Mammary epithelial cell (primary cell): ENCODE measurements at regions of chr1 and their contacts with region 1.

Region 1: DNA sequence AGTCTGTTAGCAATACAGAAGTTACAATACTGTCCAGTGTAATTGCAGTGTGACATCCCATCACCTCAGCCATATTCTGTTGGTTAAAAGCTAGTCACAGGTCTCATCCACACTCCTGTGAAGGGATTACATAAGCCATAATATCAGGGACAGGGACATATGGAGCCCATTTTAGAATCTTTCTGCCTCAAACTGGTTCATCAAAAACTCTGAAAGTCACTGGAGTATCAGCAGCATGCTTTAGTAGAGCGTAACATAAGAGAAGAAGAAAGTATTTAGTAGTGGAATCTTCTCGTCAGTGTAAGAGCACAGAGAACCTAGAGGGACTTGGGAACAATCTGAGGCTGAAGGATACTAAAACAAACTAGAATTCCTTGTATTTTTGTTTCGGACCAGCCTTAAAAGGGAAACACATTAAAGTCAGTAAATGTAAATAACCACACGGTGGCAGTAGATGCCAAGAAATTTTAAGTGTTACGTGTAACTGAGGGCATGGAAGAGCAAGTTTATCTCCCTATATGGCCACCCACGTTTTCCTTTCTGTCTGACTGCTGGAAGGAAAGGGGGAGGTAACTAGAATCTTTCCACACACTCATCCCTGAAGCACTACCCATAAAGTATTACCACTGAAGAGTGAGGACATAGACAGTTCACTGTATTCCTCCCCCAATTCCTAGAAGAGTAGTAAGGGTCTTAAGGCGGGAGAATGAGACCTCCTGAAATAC is 41.6 kb upstream of the AGL start:
- DNase-seq: peak; percentile 81
- H3K4me3 ChIP-seq: no peak overlapping the region
- H3K27ac ChIP-seq: peak overlapping the region; percentile 16
- H3K4me1 ChIP-seq: peaks cover 6% of the 10 kb centered on the region
- H3K27me3 ChIP-seq: no peaks in the 10 kb centered on the region
- CTCF ChIP-seq: peak; percentile 47 to 49

Region 2: DNA sequence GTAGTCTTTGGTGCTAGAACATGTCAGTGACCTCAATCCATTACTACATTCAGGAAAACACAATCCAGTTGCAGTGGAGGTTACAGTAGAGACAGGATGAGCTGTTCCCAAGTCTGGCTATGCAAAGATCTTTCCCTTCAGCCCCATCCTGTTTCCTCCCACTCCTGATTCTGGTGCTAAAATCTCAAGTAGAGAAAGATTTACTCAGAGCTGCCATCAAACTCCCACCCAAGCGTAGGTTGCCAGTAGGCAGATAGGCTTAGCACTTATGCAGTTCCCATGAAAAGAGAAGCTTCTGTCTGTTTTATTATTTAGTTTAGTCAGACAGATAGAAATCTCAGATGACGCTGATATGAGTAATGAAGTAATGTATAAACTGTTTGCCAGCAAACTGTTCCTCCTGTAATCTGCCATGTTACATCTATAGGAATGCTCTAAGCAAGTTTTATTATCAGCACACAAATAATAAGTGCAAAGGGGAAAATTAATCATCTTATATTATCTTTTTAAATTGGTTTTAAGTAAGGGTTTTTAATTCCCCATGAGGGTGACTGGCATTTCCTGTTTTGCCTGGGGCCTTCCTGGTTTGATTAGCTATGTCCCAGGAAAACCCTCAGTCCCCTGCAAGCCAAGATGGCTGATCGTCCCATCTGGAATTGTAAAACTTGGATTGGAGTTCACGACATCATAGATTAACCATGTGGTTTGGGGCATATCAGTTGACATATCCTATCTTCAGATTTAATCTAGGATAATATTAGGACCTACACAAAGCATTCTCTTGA is 351.0 kb before region 1 on chr1:
- CTCF ChIA-PET with region 1: no interaction called
- dilution Hi-C with region 1: no loop called
- in situ Hi-C with region 1: no loop called
- intact Hi-C with region 1: no loop called
- DNase-seq: peak; percentile 88
- H3K4me3 ChIP-seq: no peak overlapping the region
- H3K27ac ChIP-seq: peak overlapping the region; percentile 63
- H3K4me1 ChIP-seq: peaks cover 23% of the 10 kb centered on the region
- H3K27me3 ChIP-seq: no peaks in the 10 kb centered on the region
- CTCF ChIP-seq: no peak

Region 3: DNA sequence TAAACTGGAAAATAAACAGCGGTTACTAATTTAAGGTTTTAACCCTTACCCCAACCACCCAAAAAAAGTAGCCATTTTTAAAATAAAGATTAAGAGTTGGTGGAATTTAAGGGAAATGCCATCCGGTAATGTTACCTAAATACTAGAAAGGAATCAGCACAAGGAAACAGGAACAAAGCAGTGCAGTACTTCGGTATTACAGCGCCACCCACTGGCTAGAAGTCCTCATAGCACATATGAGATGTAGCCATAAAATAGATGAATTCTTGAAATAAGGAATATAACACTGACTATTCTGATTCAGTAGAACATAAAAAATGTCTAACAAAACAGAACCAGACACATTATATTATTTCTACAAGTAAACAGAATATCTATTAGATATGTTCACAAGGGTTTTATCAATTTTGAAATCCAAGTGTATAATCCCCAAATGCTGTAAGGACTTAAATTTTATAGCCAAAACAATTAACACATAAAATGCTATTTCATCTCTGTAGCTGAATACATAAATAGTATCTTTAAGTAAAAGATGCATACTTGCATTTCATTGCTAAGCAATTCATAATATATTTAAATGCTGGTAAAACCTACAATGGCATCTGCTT is 100.9 kb before region 1 on chr1:
- CTCF ChIA-PET with region 1: no interaction called
- dilution Hi-C with region 1: no loop called
- in situ Hi-C with region 1: no loop called
- intact Hi-C with region 1: no loop called
- DNase-seq: peak; percentile 38
- H3K4me3 ChIP-seq: no peak overlapping the region
- H3K27ac ChIP-seq: no peak overlapping the region
- H3K4me1 ChIP-seq: no peaks in the 10 kb centered on the region
- H3K27me3 ChIP-seq: no peaks in the 10 kb centered on the region
- CTCF ChIP-seq: peak; percentile 84 to 89

Region 4: GRCh38 chr1:99776120-99776519 is 32.4 kb before region 1 on chr1:
- CTCF ChIA-PET with region 1: no interaction called
- dilution Hi-C with region 1: no loop called
- in situ Hi-C with region 1: no loop called
- intact Hi-C with region 1: no loop called
- DNase-seq: no peak
- H3K4me3 ChIP-seq: no peak overlapping the region
- H3K27ac ChIP-seq: no peak overlapping the region
- H3K4me1 ChIP-seq: no peaks in the 10 kb centered on the region
- H3K27me3 ChIP-seq: peaks cover 3% of the 10 kb centered on the region
- CTCF ChIP-seq: no peak

Region 5: DNA sequence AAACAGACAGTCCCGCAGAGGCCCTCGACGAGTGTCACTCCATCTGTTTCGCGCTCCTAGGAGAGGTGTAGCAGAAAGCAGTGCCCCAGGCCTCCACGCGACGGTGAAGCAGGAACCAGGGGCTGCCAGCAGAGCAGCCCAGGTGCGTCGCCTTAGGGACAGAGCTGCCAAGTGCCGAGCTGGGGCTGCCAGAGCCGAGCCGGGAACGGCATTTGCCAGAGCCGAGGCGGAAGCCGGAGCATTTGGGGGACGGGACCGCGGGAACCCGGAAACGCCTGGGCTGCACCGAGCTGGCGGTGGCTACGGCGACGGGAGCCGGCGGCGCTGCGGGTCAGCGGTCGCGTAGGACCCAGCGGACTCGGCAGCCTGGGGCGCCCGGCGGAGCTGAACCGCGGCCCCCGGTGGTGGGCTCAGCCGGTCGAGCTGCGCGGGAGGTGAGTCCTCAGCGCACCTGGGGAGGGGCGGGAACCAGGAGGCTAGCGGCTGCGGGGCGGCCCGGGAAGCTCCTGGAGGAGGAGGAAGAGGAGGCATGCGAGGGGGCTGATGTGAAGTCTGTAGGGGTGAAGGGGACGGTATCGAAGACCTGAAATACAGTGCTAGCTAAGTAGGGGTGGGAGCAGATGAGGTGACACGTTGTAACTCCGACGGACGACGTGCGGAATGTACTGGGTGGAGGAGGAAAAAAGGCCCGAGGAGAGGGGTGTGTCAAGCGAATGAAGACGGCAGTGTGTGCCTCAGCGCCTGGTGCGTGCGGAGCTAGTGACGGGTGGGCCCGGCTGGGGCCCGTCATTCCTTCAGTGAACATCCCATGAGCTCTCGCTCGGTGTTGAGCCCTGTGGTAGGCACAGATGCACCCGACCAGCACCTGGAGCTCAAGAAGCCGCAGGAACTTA is 161.4 kb after region 1 on chr1 and contains the start of gene SLC35A3:
- CTCF ChIA-PET with region 1: no interaction called
- dilution Hi-C with region 1: no loop called
- in situ Hi-C with region 1: no loop called
- intact Hi-C with region 1: loop called (anchors 5 kb)
- DNase-seq: peak; percentile 77
- H3K4me3 ChIP-seq: peak within 1 kb of the TSS; percentile 50 to 90 (median 69)
- H3K27ac ChIP-seq: peak within 1 kb of the TSS; percentile 84
- H3K4me1 ChIP-seq: peaks cover 13% of the 10 kb centered on the region
- H3K27me3 ChIP-seq: no peaks in the 10 kb centered on the region
- CTCF ChIP-seq: no peak
- total RNA-seq, gene SLC35A3: 29.5 to 46.2 TPM

Region 6: GRCh38 chr1:100087396-100087795 is 278.8 kb after region 1 on chr1:
- CTCF ChIA-PET with region 1: no interaction called
- dilution Hi-C with region 1: no loop called
- in situ Hi-C with region 1: no loop called
- intact Hi-C with region 1: no loop called
- DNase-seq: no peak
- H3K4me3 ChIP-seq: no peak overlapping the region
- H3K27ac ChIP-seq: no peak overlapping the region
- H3K4me1 ChIP-seq: no peaks in the 10 kb centered on the region
- H3K27me3 ChIP-seq: no peaks in the 10 kb centered on the region
- CTCF ChIP-seq: no peak

Region 7: DNA sequence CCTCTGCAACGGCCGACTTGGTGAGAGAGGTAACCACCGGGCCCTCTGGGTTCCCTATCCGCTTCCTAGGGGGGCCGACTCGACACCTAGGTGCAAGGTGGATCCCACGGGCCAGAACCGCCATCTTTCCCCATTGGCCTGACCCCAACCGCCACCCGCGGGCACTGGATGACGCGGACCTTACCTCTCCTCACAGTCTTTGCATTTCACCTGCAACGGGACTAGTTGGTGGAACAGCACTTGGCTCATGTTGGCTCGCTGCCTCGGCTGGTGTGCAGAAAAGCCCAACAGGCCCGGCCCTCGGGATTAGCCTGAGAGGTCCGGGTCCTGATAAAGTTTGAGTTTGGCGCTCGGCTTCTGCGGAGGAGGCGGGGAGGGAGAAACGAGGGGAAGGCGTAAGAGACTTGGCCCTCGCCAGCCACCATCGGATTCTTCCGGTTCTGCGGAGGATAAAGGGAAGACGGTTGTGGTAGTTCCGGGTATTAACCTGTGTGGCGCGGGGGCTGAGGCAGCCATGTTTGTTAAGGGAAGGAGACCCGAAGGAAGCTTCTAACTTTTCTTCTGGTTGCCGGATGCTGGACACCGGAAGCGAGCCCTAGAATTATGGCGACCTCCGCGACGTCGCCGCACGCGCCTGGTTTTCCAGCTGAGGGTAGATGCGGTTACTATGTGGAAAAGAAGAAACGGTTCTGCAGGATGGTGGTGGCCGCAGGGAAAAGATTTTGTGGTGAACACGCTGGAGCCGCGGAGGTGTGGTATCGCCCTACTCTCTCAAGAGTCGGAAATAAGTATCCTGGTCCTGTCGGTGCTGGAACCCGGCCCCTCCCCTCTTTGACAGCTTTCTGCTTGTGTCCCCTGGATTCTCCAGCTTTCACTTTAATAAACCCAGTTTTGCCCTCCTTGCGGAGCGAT is 324.3 kb after region 1 on chr1 and contains the starts of genes SASS6 and TRMT13:
- CTCF ChIA-PET with region 1: no interaction called
- dilution Hi-C with region 1: no loop called
- in situ Hi-C with region 1: loop called in 1 of 2 experiments (anchors 25 kb)
- intact Hi-C with region 1: loop called (anchors 1 kb)
- DNase-seq: peak; percentile 97
- H3K4me3 ChIP-seq: peak within 1 kb of the TSS; percentile 77 to 91 (median 90)
- H3K27ac ChIP-seq: peak within 1 kb of the TSS; percentile 54
- H3K4me1 ChIP-seq: peaks cover 6% of the 10 kb centered on the region
- H3K27me3 ChIP-seq: no peaks in the 10 kb centered on the region
- CTCF ChIP-seq: no peak
- total RNA-seq, gene SASS6: 2.8 to 6.0 TPM
- total RNA-seq, gene TRMT13: 11.0 to 14.3 TPM

Region 8: DNA sequence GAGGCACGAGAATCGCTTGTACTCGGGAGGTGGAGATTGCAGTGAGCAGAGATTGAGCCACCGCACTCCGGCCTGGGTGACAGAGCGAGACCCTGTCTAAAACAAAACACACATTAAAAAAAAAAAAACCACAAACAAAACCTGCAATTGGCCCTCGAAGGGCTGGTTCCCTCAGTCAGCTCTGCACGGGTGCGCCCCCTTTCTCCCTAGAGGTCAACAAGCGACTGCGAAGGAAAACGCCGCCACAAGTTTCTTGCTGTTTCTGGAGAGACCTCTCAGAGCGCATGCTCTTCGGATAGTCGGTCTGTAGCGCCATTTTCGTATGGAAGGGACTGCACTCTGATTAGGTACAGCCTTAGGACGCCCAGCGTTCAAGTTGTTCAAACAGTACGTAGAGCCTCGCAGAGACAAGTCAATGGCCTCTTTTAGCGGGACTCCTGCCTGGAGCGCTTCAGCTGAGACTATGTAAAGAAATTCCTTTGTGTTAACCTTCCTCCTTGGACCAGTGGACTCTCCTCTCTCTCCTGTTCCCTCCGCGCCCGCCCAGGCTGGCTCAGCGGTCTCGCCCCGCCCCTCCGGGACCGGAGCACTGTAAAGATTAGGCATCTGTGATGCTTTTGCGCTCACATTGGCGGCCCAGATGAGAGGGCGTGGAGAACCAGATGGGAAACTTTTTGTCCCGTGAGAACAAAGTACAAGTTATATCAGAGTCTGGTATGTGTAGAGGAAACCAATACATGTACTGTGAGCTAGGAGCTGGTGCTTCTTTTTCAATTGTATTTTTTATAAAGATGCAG is 542.7 kb after region 1 on chr1:
- CTCF ChIA-PET with region 1: no interaction called
- dilution Hi-C with region 1: no loop called
- in situ Hi-C with region 1: no loop called
- intact Hi-C with region 1: loop called (anchors 10 kb)
- DNase-seq: peak; percentile 93
- H3K4me3 ChIP-seq: peak overlapping the region; percentile 84 to 94 (median 88)
- H3K27ac ChIP-seq: peak overlapping the region; percentile 77
- H3K4me1 ChIP-seq: peaks cover 15% of the 10 kb centered on the region
- H3K27me3 ChIP-seq: no peaks in the 10 kb centered on the region
- CTCF ChIP-seq: peak; percentile 16 to 18

Region 9: GRCh38 chr1:100866041-100866900 is 1057.7 kb after region 1 on chr1:
- CTCF ChIA-PET with region 1: no interaction called
- dilution Hi-C with region 1: no loop called
- in situ Hi-C with region 1: loop called (anchors 10 to 25 kb)
- intact Hi-C with region 1: loop called (anchors 2 kb)
- DNase-seq: peak; percentile 48
- H3K4me3 ChIP-seq: no peak overlapping the region
- H3K27ac ChIP-seq: peak overlapping the region; percentile 2
- H3K4me1 ChIP-seq: peaks cover 21% of the 10 kb centered on the region
- H3K27me3 ChIP-seq: no peaks in the 10 kb centered on the region
- CTCF ChIP-seq: peak; percentile 49 to 65